Endothelial cell of umbilical vein (primary cell): ENCODE measurements at regions of chr16 and their contacts with region 1.

Region 1: GRCh38 chr16:78503602-78504001 is 404.1 kb downstream of the WWOX start:
- DNase-seq: peak; percentile 20
- H3K4me3 ChIP-seq: no peak overlapping the region
- H3K27ac ChIP-seq: no peak overlapping the region
- H3K4me1 ChIP-seq: no peaks in the 10 kb centered on the region
- H3K27me3 ChIP-seq: no peaks in the 10 kb centered on the region
- CTCF ChIP-seq: peak; percentile 9 to 43
- POLR2A ChIP-seq: no peak

Region 2: GRCh38 chr16:78770353-78771091 is 266.9 kb after region 1 on chr16:
- CTCF ChIA-PET with region 1: no interaction called
- POLR2A ChIA-PET with region 1: no interaction called
- dilution Hi-C with region 1: no loop called
- intact Hi-C with region 1: loop called (anchors 5 kb)
- DNase-seq: no peak
- H3K4me3 ChIP-seq: no peak overlapping the region
- H3K27ac ChIP-seq: no peak overlapping the region
- H3K4me1 ChIP-seq: no peaks in the 10 kb centered on the region
- H3K27me3 ChIP-seq: no peaks in the 10 kb centered on the region
- CTCF ChIP-seq: no peak
- POLR2A ChIP-seq: no peak